HepG2 (cell line): ENCODE measurements at regions of chr4 and their contacts with region 1.

Region 1: DNA sequence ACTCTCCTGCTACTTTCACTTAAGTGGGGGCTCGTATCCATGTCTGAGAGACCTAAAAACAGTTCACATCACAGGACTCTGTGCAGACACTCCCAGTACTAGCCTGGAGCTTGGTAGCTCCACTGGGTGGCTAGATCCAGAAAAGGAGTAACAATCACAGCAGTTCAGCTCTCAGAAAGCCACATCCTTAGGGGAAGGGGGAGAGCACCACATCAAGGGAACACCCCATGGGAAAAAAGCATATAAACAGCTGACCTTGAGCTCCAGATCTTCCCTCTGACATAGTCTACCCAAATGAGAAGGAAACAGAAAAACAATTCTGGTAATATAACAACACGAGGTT is 175.8 kb downstream of the FAM13A start:
- DNase-seq: no peak
- ATAC-seq: peak; percentile 65
- H3K4me3 ChIP-seq: no peak overlapping the region
- H3K27ac ChIP-seq: no peak overlapping the region
- H3K4me1 ChIP-seq: peaks cover 28% of the 10 kb centered on the region
- H3K27me3 ChIP-seq: peaks cover 0 to 1% of the 10 kb centered on the region in 2 experiments; a peak in 1 of 5 replicates
- CTCF ChIP-seq: no peak
- EP300 ChIP-seq: no peak
- POLR2A ChIP-seq: no peak
- RAD21 ChIP-seq: no peak

Region 2: GRCh38 chr4:88823058-88823919 is 57.9 kb before region 1 on chr4:
- CTCF ChIA-PET with region 1: no interaction called
- POLR2A ChIA-PET with region 1: no interaction called
- in situ Hi-C with region 1: no loop called
- intact Hi-C with region 1: loop called (anchors 2 kb)
- DNase-seq: peak; percentile 61
- ATAC-seq: peak; percentile 97
- H3K4me3 ChIP-seq: peak overlapping the region; percentile 60 to 78 (median 76)
- H3K27ac ChIP-seq: peak overlapping the region; percentile 64
- H3K4me1 ChIP-seq: peaks cover 57% of the 10 kb centered on the region
- H3K27me3 ChIP-seq: no peaks in the 10 kb centered on the region; a peak in 1 of 5 replicates
- CTCF ChIP-seq: no peak
- EP300 ChIP-seq: peak in 1 of 2 experiments; percentile 64; a peak in 1 of 4 replicates
- POLR2A ChIP-seq: peak; percentile 34 to 95; a peak in 3 of 4 replicates
- RAD21 ChIP-seq: no peak